Activated T-helper 1 cell treated with anti-CD3 and anti-CD28 coated beads, Interleukin-12 subunit alpha, Interleukin-12 subunit beta, Interleukin-2, Interleukin-4 antibody, amounts not matched to agents 30 ng/mL and 10 ng/mL and 1 ng/mL, durations not matched to agents 14 hours and 24 hours and 36 hours (primary cell): ENCODE measurements at regions of chr19 and their contacts with region 1.

Region 1: DNA sequence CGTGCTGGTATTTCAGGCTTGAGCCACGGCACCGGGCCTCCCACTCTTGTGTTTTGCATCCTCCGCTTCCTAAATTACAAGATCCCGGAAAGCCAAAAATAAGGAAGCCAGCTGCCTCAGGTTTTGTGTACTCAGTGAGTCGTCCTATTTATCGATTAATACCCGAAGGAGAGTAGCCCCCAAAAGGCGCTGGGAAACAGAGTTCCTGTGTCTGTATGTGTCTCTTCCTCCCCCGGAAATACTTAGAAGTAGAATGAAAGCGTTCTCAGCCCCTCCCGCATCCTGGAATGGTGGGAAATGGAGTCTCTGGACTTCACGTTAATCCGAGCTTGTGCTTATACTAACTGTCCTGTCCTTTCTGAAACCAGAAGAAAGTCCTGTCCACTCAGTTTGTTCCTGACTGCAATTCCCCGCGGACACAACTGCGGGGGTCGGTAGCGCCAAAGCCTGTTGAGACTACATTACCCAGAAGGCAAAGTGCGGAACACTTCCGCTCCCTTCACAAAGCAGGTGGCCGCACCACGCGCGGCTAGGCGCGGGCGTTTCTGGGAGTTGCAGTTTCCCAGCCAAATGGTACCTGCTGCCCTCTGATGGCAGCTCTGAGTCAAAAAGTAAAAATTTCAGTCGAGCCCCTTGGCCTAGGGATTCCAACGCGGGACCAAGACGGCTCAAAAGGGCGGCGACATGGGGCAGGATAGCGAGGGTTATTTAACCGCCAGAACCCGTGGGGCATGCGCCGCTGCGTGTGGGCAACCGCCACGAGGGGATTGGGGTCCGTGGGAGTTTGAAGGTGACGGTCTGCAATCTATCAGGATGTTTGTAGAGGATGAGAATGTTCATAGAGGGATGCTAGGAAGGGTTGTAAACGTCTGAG is 2.2 kb upstream of the GSK3A start:
- DNase-seq: peak; percentile 89
- H3K4me3 Mint-ChIP-seq: peak overlapping the region; percentile 92
- H3K27ac Mint-ChIP-seq: peak overlapping the region; percentile 91
- H3K4me1 Mint-ChIP-seq: peaks cover 50% of the 10 kb centered on the region
- H3K27me3 Mint-ChIP-seq: no peaks in the 10 kb centered on the region

Region 2: DNA sequence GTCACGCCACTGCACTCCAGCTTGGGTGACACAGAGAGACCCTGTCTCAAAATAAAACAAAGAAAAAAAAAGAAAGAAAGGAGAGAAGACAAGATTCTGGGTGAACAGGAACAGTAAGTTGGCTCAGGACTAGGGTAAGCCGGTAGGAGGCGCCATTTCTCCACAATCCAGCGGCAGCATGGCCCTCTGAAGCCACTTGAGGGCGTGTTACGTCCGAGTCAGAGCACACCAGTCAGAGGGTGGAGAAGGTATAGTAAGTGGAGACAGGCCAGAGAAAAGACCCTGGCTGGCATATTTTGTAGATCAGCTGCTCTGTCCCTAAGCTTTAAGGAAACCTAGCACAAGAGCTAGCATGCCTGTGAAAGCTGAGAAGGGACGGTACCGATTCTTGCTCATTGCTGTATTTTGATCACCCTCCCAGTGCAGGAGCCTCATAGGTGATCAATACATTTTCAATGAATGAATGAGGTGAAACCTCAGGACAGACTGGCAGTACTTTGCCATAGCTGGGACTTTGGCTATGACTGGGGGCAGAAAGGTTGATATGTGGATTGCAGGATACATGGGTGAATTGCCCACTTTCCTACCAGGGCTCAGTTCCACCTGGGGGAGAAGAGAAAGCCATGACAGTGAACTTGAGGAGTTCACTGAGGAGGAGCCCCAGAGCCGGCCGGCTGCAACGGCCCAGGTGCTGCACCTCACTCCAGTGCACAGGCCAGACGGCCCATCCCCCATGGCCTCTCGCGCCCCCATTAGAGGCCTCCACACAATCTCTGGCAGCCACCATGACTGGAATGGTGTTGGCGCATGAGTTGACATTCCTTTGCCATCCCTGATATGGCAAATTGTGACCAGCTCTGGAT is 135.8 kb before region 1 on chr19:
- intact Hi-C with region 1: loop called (anchors 1 kb)
- DNase-seq: peak; percentile 82
- H3K4me3 Mint-ChIP-seq: no peak overlapping the region
- H3K27ac Mint-ChIP-seq: peak overlapping the region; percentile 42
- H3K4me1 Mint-ChIP-seq: peaks cover 43% of the 10 kb centered on the region
- H3K27me3 Mint-ChIP-seq: no peaks in the 10 kb centered on the region

Region 3: DNA sequence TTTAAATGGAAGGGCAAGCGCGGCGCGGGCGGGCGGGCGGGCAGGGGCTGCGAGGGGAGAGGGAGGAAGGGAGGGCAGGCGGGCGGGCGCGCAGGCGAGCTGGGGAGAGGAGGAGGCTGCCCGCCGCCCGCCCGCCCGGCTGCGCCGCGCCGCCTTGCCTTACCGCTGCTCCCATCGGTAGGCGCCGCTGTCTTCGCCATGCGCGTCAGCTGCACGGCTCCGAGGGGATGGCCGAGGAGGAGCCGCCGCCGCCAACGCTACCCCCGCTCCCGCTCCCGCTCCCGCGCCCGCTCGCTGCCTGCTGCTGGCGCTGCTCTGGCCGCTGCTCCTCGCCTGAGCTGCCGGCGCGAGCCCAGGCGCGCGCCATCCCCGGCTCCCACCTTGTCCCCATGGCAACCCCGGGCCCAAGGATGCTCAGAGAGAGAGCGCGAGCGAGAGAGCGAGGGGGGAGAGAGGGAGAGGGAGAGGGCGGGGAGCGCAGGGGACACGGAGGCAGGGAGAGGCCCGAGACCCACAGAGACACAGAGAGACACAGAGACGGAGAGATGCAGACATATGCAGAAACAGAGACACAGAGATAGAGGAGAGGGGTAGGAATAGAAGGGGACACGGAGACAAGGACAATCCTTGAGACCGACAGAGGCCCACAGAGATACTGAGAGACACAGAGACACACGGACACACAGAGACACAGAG is 67.4 kb before region 1 on chr19:
- intact Hi-C with region 1: loop called (anchors 2 kb)
- DNase-seq: peak; percentile 71
- H3K4me3 Mint-ChIP-seq: no peak overlapping the region
- H3K27ac Mint-ChIP-seq: no peak overlapping the region
- H3K4me1 Mint-ChIP-seq: peaks cover 19% of the 10 kb centered on the region
- H3K27me3 Mint-ChIP-seq: peaks cover 38% of the 10 kb centered on the region

Region 4: GRCh38 chr19:42254989-42255765 is 10.6 kb after region 1 on chr19 and contains the start of gene ERF:
- intact Hi-C with region 1: loop called (anchors 1 kb)
- DNase-seq: peak; percentile 92
- H3K4me3 Mint-ChIP-seq: peak within 1 kb of the TSS; percentile 74
- H3K27ac Mint-ChIP-seq: peak within 1 kb of the TSS; percentile 65
- H3K4me1 Mint-ChIP-seq: peaks cover 19% of the 10 kb centered on the region
- H3K27me3 Mint-ChIP-seq: peaks cover 9% of the 10 kb centered on the region
- total RNA-seq, gene ERF: 71.9 and 78.4 TPM in 2 replicates

Region 5: DNA sequence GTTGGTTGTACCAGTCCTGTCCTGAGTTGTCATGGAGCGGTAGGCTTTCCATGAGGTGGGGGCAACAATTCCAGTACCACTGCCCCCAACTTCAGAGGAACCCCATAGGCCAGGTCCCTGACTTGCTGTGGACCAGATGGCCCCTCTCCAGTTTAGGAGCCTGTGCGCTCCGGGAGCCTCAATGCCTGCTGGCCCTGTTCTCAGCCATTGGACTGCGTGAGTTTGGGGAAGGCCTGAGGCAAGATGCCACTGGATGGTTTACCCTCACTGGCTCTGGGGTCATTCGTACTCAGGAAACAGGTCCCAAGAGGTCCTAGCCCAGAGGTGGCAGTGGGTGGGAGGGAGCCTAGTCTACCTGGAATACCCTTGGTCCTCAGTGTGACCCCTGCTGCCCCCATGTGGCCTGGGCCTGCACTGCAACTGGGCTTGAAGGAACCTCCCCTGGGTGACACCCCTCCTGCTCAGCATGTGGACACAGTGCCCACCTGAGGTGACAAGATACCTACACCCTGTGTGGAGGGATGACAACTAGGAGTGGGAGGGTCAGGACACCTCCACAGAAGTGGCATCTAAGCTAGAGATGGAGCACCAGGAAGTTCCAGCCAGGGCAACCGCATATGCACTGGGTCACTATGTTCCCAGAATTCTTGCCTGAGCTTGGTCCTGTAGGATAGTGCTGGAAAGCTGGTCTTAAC is 51.4 kb after region 1 on chr19:
- intact Hi-C with region 1: loop called (anchors 1 kb)
- DNase-seq: peak; percentile 78
- H3K4me3 Mint-ChIP-seq: no peak overlapping the region
- H3K27ac Mint-ChIP-seq: peak overlapping the region; percentile 3
- H3K4me1 Mint-ChIP-seq: no peaks in the 10 kb centered on the region
- H3K27me3 Mint-ChIP-seq: no peaks in the 10 kb centered on the region

Region 6: GRCh38 chr19:42396381-42397262 is 152.0 kb after region 1 on chr19:
- intact Hi-C with region 1: loop called (anchors 1 kb)
- DNase-seq: peak; percentile 97
- H3K4me3 Mint-ChIP-seq: peak overlapping the region; percentile 89
- H3K27ac Mint-ChIP-seq: peak overlapping the region; percentile 93
- H3K4me1 Mint-ChIP-seq: peaks cover 34% of the 10 kb centered on the region
- H3K27me3 Mint-ChIP-seq: peaks cover 5% of the 10 kb centered on the region